ENCODE measurements at regions of chr22 and their contacts with region 1.

Region 1: GRCh38 chr22:48492366-48493320 is 1335.0 kb downstream of the BRD1 start:
- DNase-seq: peak; percentile 77
- CTCF ChIP-seq: peak; percentile 73

Region 2: GRCh38 chr22:48503876-48504275 is 11.2 kb after region 1 on chr22:
- CTCF ChIA-PET with region 1: interaction called, 12 read pairs
- POLR2A ChIA-PET with region 1: no interaction called
- DNase-seq: no peak
- CTCF ChIP-seq: no peak

Region 3: DNA sequence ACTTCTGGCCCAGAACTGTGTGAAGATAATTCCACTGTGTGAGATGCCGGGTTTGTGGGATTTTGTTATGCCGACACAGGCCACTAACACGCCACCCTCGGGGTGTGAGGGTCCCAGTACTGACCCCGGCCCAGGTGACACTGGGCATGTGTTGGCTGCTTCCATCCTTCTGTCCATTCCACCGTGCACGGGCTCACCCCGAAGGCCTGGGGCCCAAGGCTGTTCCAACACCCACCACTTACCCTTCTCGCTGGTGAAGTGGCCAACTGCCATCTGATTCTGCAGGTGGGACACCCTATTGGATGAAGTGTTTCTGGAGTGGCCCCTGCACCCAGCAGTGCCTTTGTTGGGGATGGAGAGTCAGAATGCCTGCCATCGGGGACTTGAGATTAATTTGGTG is 27.6 kb after region 1 on chr22:
- CTCF ChIA-PET with region 1: no interaction called
- POLR2A ChIA-PET with region 1: no interaction called
- DNase-seq: no peak
- CTCF ChIP-seq: no peak

Measured in GM10248 (cell line).